ENCODE measurements at regions of chr12 and their contacts with region 1.

Region 1: GRCh38 chr12:93167841-93168492 is 209.8 kb upstream of the NUDT4 start:
- DNase-seq: peak; percentile 95
- ATAC-seq: peak; percentile 84
- H3K4me3 ChIP-seq: peak overlapping the region; percentile 69
- H3K27ac ChIP-seq: peak overlapping the region; percentile 88
- H3K4me1 ChIP-seq: peaks cover 32% of the 10 kb centered on the region
- H3K27me3 ChIP-seq: no peaks in the 10 kb centered on the region
- CTCF ChIP-seq: no peak
- EP300 ChIP-seq: peak; percentile 78 to 87; a peak in 3 of 4 replicates
- POLR2A ChIP-seq: no peak
- RAD21 ChIP-seq: peak; percentile 23; the same call in 1 of the 2 replicates

Region 2: DNA sequence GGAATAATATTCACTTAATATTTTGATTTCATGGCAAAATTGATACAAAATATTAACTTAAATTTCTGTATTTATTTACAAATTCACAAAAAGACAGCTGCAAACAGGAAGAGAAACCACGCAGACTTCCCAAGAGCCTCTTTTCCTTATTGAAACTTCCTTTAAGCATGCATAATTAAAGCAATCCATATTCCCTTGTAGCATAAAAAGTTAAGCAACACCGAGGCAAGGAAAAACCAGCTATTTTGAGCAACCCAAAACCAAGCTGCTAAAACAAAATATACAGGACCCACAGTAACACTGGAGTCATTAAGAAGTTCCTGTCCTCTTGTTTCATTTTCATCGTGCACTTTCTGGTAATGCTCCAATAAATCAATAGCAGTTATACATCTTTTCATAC is 296.9 kb before region 1 on chr12:
- CTCF ChIA-PET with region 1: no interaction called
- POLR2A ChIA-PET with region 1: no interaction called
- RAD21 ChIA-PET with region 1: no interaction called
- SMC1A ChIA-PET with region 1: no interaction called
- in situ Hi-C with region 1: no loop called
- intact Hi-C with region 1: no loop called
- DNase-seq: no peak
- ATAC-seq: no peak
- H3K4me3 ChIP-seq: no peak overlapping the region
- H3K27ac ChIP-seq: no peak overlapping the region
- H3K4me1 ChIP-seq: peaks cover 5% of the 10 kb centered on the region
- H3K27me3 ChIP-seq: no peaks in the 10 kb centered on the region
- CTCF ChIP-seq: no peak
- EP300 ChIP-seq: no peak
- POLR2A ChIP-seq: no peak
- RAD21 ChIP-seq: no peak

Region 3: GRCh38 chr12:93089805-93090569 is 78.0 kb before region 1 on chr12:
- CTCF ChIA-PET with region 1: interaction called, 5 read pairs
- POLR2A ChIA-PET with region 1: interaction called, 8 read pairs
- RAD21 ChIA-PET with region 1: interaction called, 43 read pairs
- SMC1A ChIA-PET with region 1: interaction called, 41 read pairs
- in situ Hi-C with region 1: no loop called
- intact Hi-C with region 1: no loop called
- DNase-seq: no peak
- ATAC-seq: peak; percentile 81
- H3K4me3 ChIP-seq: no peak overlapping the region
- H3K27ac ChIP-seq: no peak overlapping the region
- H3K4me1 ChIP-seq: peaks cover 4% of the 10 kb centered on the region
- H3K27me3 ChIP-seq: no peaks in the 10 kb centered on the region
- CTCF ChIP-seq: no peak
- EP300 ChIP-seq: no peak
- POLR2A ChIP-seq: no peak
- RAD21 ChIP-seq: no peak

Region 4: GRCh38 chr12:93104535-93104934 is 63.4 kb before region 1 on chr12:
- CTCF ChIA-PET with region 1: no interaction called
- POLR2A ChIA-PET with region 1: interaction called, 3 read pairs
- RAD21 ChIA-PET with region 1: interaction called, 43 read pairs
- SMC1A ChIA-PET with region 1: interaction called, 41 read pairs
- in situ Hi-C with region 1: no loop called
- intact Hi-C with region 1: loop called (anchors 2 kb)
- DNase-seq: no peak
- ATAC-seq: no peak
- H3K4me3 ChIP-seq: no peak overlapping the region
- H3K27ac ChIP-seq: no peak overlapping the region
- H3K4me1 ChIP-seq: peaks cover 9% of the 10 kb centered on the region
- H3K27me3 ChIP-seq: no peaks in the 10 kb centered on the region
- CTCF ChIP-seq: no peak
- EP300 ChIP-seq: no peak
- POLR2A ChIP-seq: no peak
- RAD21 ChIP-seq: no peak

Region 5: GRCh38 chr12:93156094-93156716 is 11.8 kb before region 1 on chr12:
- CTCF ChIA-PET with region 1: interaction called, 7 read pairs
- POLR2A ChIA-PET with region 1: interaction called, 3 read pairs
- RAD21 ChIA-PET with region 1: interaction called, 3 read pairs
- SMC1A ChIA-PET with region 1: interaction called, 15 read pairs
- in situ Hi-C with region 1: no loop called
- intact Hi-C with region 1: no loop called
- DNase-seq: no peak
- ATAC-seq: no peak
- H3K4me3 ChIP-seq: no peak overlapping the region
- H3K27ac ChIP-seq: no peak overlapping the region
- H3K4me1 ChIP-seq: no peaks in the 10 kb centered on the region
- H3K27me3 ChIP-seq: no peaks in the 10 kb centered on the region
- CTCF ChIP-seq: no peak
- EP300 ChIP-seq: no peak
- POLR2A ChIP-seq: no peak
- RAD21 ChIP-seq: no peak

Region 6: DNA sequence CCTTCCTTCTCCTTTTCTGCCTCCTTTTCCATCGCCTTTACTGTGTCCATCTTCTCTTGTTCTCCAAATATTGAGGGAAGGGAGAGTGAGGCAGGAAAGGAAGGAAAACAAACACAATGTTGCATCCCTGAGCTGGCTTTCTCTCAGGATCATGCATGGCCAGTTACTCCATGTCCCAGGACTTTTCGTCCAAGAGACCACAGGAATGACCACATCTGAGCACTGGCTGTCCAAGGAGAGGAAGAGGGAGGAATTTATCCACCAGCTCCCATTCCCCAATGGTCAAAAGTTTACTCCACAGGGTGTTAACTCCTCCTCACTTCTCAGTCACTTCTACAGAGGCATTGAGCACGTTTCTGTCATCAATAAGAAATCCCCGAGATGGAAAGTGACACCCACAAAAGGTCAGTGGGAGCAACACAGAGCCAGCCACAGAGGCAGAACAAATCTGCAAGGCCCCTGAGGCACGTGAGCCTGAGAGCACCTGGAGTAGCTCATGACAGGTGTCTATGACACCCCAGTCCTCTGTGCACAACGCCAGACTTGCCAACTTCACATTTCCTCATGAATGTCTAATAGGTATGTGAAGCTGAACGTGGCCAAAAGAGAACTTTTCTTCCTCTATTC is 32.4 kb after region 1 on chr12:
- CTCF ChIA-PET with region 1: no interaction called
- POLR2A ChIA-PET with region 1: no interaction called
- RAD21 ChIA-PET with region 1: interaction called, 5 read pairs
- SMC1A ChIA-PET with region 1: interaction called, 13 read pairs
- in situ Hi-C with region 1: no loop called
- intact Hi-C with region 1: no loop called
- DNase-seq: peak; percentile 32
- ATAC-seq: peak; percentile 90
- H3K4me3 ChIP-seq: no peak overlapping the region
- H3K27ac ChIP-seq: no peak overlapping the region
- H3K4me1 ChIP-seq: peaks cover 14% of the 10 kb centered on the region
- H3K27me3 ChIP-seq: no peaks in the 10 kb centered on the region
- CTCF ChIP-seq: no peak
- EP300 ChIP-seq: 0 out of 4 replicates have a peak, but pooled peaks of 1 of the 2 experiments have one; percentile 19
- POLR2A ChIP-seq: no peak
- RAD21 ChIP-seq: no peak

Region 7: GRCh38 chr12:93397412-93397811 is 229.4 kb after region 1 on chr12:
- CTCF ChIA-PET with region 1: interaction called, 13 read pairs
- POLR2A ChIA-PET with region 1: no interaction called
- RAD21 ChIA-PET with region 1: interaction called, 4 read pairs
- SMC1A ChIA-PET with region 1: interaction called, 5 read pairs
- in situ Hi-C with region 1: no loop called
- intact Hi-C with region 1: no loop called
- DNase-seq: no peak
- ATAC-seq: no peak
- H3K4me3 ChIP-seq: no peak overlapping the region
- H3K27ac ChIP-seq: no peak overlapping the region
- H3K4me1 ChIP-seq: no peaks in the 10 kb centered on the region; the same call in 1 of the 2 replicates
- H3K27me3 ChIP-seq: no peaks in the 10 kb centered on the region
- CTCF ChIP-seq: no peak
- EP300 ChIP-seq: no peak
- POLR2A ChIP-seq: no peak
- RAD21 ChIP-seq: no peak

Region 8: GRCh38 chr12:93514853-93515252 is 346.9 kb after region 1 on chr12:
- CTCF ChIA-PET with region 1: no interaction called
- POLR2A ChIA-PET with region 1: no interaction called
- RAD21 ChIA-PET with region 1: no interaction called
- SMC1A ChIA-PET with region 1: no interaction called
- in situ Hi-C with region 1: no loop called
- intact Hi-C with region 1: no loop called
- DNase-seq: no peak
- ATAC-seq: no peak
- H3K4me3 ChIP-seq: no peak overlapping the region
- H3K27ac ChIP-seq: no peak overlapping the region
- H3K4me1 ChIP-seq: no peaks in the 10 kb centered on the region
- H3K27me3 ChIP-seq: no peaks in the 10 kb centered on the region
- CTCF ChIP-seq: no peak
- EP300 ChIP-seq: no peak
- POLR2A ChIP-seq: no peak
- RAD21 ChIP-seq: no peak

Measured in GM12878 (cell line).